Lower leg skin (tissue), 4 donors: ENCODE measurements at regions of chrX and their contacts with region 1.

Region 1: DNA sequence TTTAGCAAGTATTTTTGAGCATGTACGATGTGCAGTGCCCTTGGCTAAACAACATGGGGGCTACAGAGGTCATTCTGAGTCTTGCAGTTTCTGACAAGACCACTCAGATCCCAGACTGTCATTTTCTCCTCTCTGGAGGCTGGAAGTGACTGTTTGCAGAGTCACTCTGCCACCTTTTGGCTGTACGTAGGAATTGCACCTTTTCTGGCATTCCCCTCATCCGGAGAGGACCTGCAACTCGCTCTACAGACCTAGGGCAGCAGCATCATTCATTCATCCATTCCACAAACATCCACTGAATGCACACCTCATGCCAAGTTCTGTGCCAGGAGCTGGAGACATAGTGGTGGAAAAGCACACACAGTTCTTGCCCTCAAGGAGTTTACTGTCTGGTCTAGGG is 160.4 kb upstream of the GPR101 start:
- DNase-seq: no peak
- H3K4me3 ChIP-seq: no peak overlapping the region
- CTCF ChIP-seq: no peak
- POLR2A ChIP-seq: no peak

Region 2: DNA sequence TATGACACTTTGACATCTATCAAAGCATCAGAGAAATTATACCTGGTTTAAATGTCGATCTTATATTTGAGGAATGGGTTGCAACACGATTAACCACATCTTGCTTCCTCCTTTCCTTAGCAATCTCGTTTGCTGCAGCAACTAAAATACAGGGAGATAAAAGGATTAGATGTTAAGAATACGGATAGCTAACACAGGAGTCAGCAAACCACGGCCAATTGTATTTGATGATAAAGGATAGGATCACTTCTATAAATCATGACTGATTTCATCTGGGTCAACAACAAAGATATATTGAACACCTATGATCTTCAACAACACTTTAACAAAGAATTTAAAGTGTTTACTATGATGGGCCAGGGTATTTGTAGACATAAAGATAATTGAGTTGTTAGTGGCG is 948.0 kb before region 1 on chrX:
- intact Hi-C with region 1: loop called (anchors 10 kb)
- DNase-seq: no peak
- H3K4me3 ChIP-seq: no peak overlapping the region
- CTCF ChIP-seq: no peak
- POLR2A ChIP-seq: no peak